ENCODE measurements at regions of chr17 and their contacts with region 1.

Region 1: DNA sequence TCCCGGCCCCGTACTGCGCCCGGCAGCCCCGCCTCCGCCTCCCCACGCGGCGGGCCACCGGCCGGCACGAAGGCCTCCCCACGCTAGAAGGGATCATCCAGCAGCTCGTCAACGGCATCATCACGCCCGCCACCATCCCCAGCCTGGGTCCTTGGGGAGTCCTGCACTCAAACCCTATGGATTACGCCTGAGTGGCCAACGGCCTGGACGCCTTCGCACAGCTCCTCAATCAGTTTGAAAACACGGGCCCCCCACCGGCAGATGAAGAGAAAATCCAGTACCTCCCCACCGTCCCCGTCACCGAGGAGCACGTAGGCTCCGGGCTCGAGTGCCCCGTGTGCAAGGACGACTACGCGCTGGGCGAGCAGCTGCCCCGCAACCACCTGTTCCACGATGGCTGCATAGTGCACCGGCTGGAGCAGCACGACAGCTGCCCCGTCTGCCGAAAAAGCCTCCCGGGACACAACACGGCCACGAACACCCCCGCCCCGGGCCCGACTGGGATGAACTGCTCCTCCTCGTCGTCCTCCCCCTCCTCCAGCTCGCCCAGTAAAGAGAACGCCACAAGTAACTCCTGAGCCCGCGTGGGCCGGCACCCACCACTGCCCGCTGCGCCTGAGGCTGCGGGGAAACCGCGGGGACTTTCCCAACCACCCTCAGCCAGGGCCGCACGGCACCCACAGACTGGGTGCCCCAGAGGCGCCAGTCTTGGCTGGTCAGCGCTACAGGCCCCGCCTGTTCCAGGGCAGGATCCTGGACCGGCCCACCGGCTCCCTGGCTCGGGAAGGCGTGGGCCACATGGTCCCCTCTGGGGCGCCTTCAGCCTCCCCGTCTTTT is 39.0 kb upstream of the AKAP1 start:
- DNase-seq: peak in 1 of 2 donors; percentile 69
- H3K4me3 ChIP-seq: peak overlapping the region; percentile 41 to 58
- H3K27ac ChIP-seq: peak overlapping the region; percentile 60 to 61
- H3K4me1 ChIP-seq: peaks cover 4 to 15% (median 10%) of the 10 kb centered on the region in 4 donors
- H3K27me3 ChIP-seq: peaks cover 0 to 4% of the 10 kb centered on the region in 2 donors
- CTCF ChIP-seq: no peak

Region 2: GRCh38 chr17:57084802-57085447 is 38.8 kb after region 1 on chr17 and contains the start of gene AKAP1:
- intact Hi-C with region 1: loop called (anchors 5 kb)
- DNase-seq: peak; percentile 93 to 98
- H3K4me3 ChIP-seq: peak within 1 kb of the TSS; percentile 87 to 97
- H3K27ac ChIP-seq: peak within 1 kb of the TSS; percentile 97 to 98
- H3K4me1 ChIP-seq: peaks cover 0 to 35% (median 26%) of the 10 kb centered on the region in 4 donors
- H3K27me3 ChIP-seq: no peaks in the 10 kb centered on the region
- CTCF ChIP-seq: no peak

Region 3: DNA sequence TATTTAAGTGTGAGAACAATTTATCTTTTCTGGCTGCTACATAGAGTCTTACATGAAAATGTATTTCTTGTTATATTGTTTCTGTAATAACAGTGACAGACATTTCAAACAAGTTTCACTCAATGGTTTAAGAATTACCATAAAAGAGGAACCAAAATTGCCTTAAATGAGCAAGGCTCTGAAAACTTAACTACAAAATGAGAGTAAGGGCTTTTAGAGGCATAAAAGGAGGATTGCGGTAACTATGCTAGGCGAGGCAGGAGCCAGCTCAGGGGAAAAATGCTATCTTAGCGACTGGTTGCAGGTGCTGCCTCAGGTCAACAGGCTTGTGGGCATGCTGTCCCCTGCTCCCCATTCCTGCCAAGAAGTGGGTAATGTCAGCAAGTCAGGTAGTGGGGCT is 128.5 kb after region 1 on chr17:
- intact Hi-C with region 1: no loop called
- DNase-seq: no peak
- H3K4me3 ChIP-seq: no peak overlapping the region
- H3K27ac ChIP-seq: no peak overlapping the region
- H3K4me1 ChIP-seq: no peaks in the 10 kb centered on the region
- H3K27me3 ChIP-seq: peaks cover 0 to 5% of the 10 kb centered on the region in 2 donors
- CTCF ChIP-seq: no peak